ENCODE measurements at regions of chr5 and their contacts with region 1.

Region 1: DNA sequence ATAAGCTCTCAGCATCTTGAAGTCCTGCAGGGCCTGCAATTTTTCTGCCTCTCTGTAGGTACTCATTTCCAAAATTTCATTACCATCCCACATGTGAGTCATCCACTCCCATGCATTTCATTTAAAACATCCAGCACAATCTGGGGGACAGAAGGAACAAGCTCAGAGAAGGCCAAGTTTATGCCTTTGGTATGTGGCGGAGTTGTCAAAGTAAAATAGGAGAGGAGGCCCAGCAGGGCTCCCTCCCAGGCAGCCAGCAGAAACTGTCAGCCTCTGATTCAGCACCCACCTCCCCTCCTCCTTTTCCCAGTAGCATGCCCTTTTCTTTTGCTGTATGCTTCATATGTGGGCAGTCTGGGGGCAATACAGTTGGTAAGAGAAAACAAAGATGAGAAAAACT is 126.4 kb upstream of the ZNF366 start:
- DNase-seq: no peak
- ATAC-seq: no peak
- H3K4me3 Mint-ChIP-seq: no peak overlapping the region
- H3K27ac Mint-ChIP-seq: no peak overlapping the region
- H3K4me1 Mint-ChIP-seq: no peaks in the 10 kb centered on the region
- H3K27me3 Mint-ChIP-seq: peaks cover 17% of the 10 kb centered on the region

Region 2: GRCh38 chr5:71922584-71923106 is 711.0 kb before region 1 on chr5:
- CTCF ChIA-PET with region 1: no interaction called
- POLR2A ChIA-PET with region 1: no interaction called
- intact Hi-C with region 1: no loop called
- DNase-seq: no peak
- ATAC-seq: no peak
- H3K4me3 Mint-ChIP-seq: no peak overlapping the region
- H3K27ac Mint-ChIP-seq: no peak overlapping the region
- H3K4me1 Mint-ChIP-seq: no peaks in the 10 kb centered on the region
- H3K27me3 Mint-ChIP-seq: peaks cover 22% of the 10 kb centered on the region

Region 3: DNA sequence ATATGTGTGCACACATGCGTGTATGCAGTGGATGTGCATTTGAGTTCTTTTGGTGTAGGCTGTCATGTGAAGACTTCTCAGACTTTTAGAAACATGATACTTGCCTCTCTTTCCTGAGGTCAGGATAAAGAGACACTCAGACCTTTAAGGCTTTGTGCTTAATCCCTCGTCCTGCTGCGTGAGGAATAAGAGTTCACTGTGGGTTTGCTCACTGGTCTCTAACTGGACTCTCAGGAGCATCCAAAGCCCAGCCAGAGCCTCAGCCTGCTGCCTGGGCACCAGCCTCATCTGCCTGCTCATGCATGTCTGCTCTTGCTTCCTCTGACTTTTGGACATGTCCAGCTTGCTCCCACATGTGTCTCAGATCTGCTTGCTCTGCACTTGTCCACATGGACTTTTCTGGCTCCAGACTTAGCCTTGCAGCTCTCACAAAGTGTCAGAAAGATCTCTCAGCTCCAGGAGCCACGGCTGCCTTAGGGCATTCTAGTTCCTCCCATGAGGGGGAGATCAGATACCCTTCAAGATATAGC is 61.3 kb before region 1 on chr5:
- CTCF ChIA-PET with region 1: no interaction called
- POLR2A ChIA-PET with region 1: no interaction called
- intact Hi-C with region 1: loop called in 1 of 2 experiments (anchors 10 kb)
- DNase-seq: no peak
- ATAC-seq: no peak
- H3K4me3 Mint-ChIP-seq: no peak overlapping the region
- H3K27ac Mint-ChIP-seq: no peak overlapping the region
- H3K4me1 Mint-ChIP-seq: no peaks in the 10 kb centered on the region
- H3K27me3 Mint-ChIP-seq: peaks cover 51% of the 10 kb centered on the region

Measured in activated CD4-positive, alpha-beta T cell treated with anti-CD3 and anti-CD28 coated beads for 36 hours (primary cell).